CD8-positive, alpha-beta T cell (primary cell): ENCODE measurements at regions of chr16 and their contacts with region 1.

Region 1: DNA sequence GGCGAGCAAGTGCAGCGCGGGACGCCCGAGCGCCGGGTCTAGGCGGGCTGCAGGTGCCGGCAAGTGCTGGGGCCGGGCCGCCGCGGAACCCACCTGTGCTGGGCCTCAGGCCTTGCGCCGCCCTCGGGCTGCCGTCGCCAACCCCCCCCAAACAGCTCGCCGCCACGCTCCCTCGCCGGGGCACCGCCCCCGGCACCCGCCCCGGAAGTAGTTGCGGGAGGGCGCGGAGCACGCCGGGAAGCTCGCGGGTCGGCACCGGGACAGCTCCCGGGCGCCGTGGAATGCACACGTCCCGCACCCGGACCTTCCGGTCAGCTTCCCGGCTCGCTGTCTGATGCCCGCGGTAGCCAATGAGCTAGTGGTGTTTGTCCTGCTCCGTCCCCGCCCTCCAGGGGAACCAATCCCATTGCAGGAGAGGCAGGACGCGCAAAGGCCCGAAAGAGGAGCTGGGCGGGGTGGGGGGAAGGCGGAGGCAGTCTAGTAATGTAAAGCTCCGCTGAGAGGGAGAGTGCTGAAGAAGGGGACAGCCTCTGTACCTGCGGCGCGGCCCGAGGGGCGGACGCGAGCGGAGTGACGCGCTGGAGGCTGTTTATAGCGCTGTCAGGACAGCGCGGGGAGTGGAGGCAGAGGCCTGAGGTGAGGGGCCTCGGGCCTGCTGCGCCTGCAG is at the starts of genes ANKS3 and DNAAF8:
- DNase-seq: peak; percentile 47 to 90 (median 79)
- ATAC-seq: peak; percentile 73
- H3K4me3 ChIP-seq: peak within 1 kb of the TSS; percentile 81 to 96
- H3K4me3 Mint-ChIP-seq: peak within 1 kb of the TSS; percentile 91
- H3K27ac ChIP-seq: peak within 1 kb of the TSS; percentile 69 to 75
- H3K27ac Mint-ChIP-seq: peak within 1 kb of the TSS; percentile 92
- H3K4me1 ChIP-seq: peaks cover 13% of the 10 kb centered on the region
- H3K4me1 Mint-ChIP-seq: peaks cover 17% of the 10 kb centered on the region
- H3K27me3 ChIP-seq: no peaks in the 10 kb centered on the region
- H3K27me3 Mint-ChIP-seq: no peaks in the 10 kb centered on the region
- CTCF ChIP-seq: no peak
- total RNA-seq, gene ANKS3: 8.6 to 11.8 TPM
- total RNA-seq, gene DNAAF8: not detected

Region 2: DNA sequence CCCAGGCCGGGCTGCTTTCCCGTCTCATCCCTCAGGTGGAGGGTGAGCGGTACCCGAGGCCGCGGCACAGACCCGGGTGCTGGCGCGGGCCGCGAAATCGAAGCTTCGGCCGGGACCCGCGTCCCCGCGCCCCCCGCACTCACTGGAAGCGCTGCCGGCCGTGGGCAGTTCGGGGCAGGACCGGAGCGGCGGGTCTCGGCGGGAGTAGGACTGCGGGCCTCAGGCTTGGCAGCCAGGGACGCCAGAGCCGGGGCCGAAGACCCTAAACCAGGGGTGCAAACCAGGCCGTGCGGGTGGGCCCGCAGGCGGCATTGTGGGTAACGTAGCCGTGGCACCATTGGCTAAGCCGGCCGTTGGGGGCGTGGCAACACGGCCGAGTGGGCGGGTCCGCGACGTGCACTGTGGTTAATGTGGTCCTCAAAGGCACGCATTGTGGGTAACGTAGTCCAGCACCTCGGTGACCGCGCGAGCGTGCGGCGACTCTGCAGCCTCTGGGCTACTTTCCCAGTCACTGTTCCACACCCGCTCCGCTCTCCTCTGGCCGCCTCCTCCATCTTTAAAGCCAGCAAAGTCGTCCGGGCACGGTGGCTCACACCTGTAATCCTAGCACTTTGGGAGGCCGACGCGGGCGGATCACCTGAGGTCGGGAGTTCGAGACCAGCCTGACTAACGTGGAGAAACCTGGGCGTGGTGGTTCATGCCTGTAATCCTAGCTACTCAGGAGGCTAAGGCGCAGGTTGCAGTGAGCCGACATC is 32.9 kb after region 1 on chr16 and contains the start of gene ZNF500:
- CTCF ChIA-PET with region 1: interaction called, 4 read pairs
- POLR2A ChIA-PET with region 1: interaction called, 39 read pairs
- intact Hi-C with region 1: loop called (anchors 1 kb)
- DNase-seq: peak; percentile 89 to 98 (median 96)
- ATAC-seq: peak; percentile 90
- H3K4me3 ChIP-seq: peak within 1 kb of the TSS; percentile 77 to 83
- H3K4me3 Mint-ChIP-seq: peak within 1 kb of the TSS; percentile 91
- H3K27ac ChIP-seq: peak within 1 kb of the TSS; percentile 67 to 77
- H3K27ac Mint-ChIP-seq: peak within 1 kb of the TSS; percentile 81
- H3K4me1 ChIP-seq: peaks cover 22% of the 10 kb centered on the region
- H3K4me1 Mint-ChIP-seq: peaks cover 45% of the 10 kb centered on the region
- H3K27me3 ChIP-seq: no peaks in the 10 kb centered on the region
- H3K27me3 Mint-ChIP-seq: no peaks in the 10 kb centered on the region
- CTCF ChIP-seq: no peak
- total RNA-seq, gene ZNF500: 12.1 to 15.9 TPM

Region 3: GRCh38 chr16:4802659-4803287 is 68.6 kb after region 1 on chr16:
- CTCF ChIA-PET with region 1: interaction called, 6 read pairs
- POLR2A ChIA-PET with region 1: interaction called, 14 read pairs
- intact Hi-C with region 1: loop called (anchors 1 kb)
- DNase-seq: peak; percentile 79 to 95 (median 88)
- ATAC-seq: peak; percentile 86
- H3K4me3 ChIP-seq: peak overlapping the region; percentile 60 to 89
- H3K4me3 Mint-ChIP-seq: peak overlapping the region; percentile 87
- H3K27ac ChIP-seq: peak overlapping the region; percentile 25 to 77
- H3K27ac Mint-ChIP-seq: peak overlapping the region; percentile 74
- H3K4me1 ChIP-seq: peaks cover 14% of the 10 kb centered on the region
- H3K4me1 Mint-ChIP-seq: peaks cover 11% of the 10 kb centered on the region
- H3K27me3 ChIP-seq: no peaks in the 10 kb centered on the region
- H3K27me3 Mint-ChIP-seq: no peaks in the 10 kb centered on the region
- CTCF ChIP-seq: no peak

Region 4: DNA sequence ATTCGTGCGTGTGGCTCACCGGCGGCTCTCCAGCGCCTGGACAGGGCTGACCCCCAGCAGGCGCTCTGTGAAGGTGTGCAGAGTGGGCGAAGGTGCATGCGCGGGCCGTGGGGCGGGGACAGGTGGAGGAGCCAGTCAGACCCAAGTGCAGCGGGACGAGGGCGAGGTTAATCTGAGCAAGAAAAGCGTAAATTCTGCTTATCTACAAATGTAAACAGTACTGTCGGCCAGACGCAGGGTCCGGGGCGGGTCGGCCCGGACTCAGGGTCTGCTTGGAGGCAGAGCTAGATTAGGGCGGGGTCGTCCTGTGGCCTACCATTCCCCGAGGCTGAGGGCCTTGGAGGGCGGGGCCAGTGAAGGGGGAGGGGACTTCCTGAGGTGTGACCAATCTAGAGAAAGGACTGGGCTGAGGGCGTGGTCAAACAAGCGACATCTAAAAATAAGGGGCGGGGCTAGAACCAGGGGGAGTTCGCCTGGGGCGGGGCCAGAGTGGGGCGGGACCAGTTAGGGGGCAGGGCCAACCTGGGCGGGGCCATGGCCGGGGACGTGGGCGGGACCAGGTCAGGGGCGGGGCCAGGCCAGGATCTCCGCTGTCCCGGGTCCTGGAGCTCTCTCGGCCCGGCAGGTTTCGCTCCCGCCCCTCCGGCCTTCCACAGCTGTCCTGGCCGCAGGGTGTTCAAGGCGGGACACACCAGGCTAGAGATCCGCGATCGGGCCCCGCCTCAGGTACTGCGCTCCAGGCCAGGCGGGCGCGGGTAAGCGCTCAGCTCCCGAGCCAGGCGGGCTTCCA is 223.7 kb after region 1 on chr16 and contains the start of gene SEC14L5:
- CTCF ChIA-PET with region 1: no interaction called
- POLR2A ChIA-PET with region 1: no interaction called
- intact Hi-C with region 1: loop called in 1 of 2 experiments (anchors 10 kb)
- DNase-seq: peak; percentile 72 to 92 (median 87)
- ATAC-seq: peak; percentile 98
- H3K4me3 ChIP-seq: peak within 1 kb of the TSS; percentile 40 to 70
- H3K4me3 Mint-ChIP-seq: peak within 1 kb of the TSS; percentile 82
- H3K27ac ChIP-seq: no peak within 1 kb of the TSS
- H3K27ac Mint-ChIP-seq: no peak within 1 kb of the TSS
- H3K4me1 ChIP-seq: peaks cover 15% of the 10 kb centered on the region
- H3K4me1 Mint-ChIP-seq: peaks cover 20% of the 10 kb centered on the region
- H3K27me3 ChIP-seq: peaks cover 6 to 22% of the 10 kb centered on the region in 2 experiments
- H3K27me3 Mint-ChIP-seq: peaks cover 55% of the 10 kb centered on the region
- CTCF ChIP-seq: no peak
- total RNA-seq, gene SEC14L5: not detected